B cell (primary cell): ENCODE measurements at regions of chr3 and their contacts with region 1.

Region 1: DNA sequence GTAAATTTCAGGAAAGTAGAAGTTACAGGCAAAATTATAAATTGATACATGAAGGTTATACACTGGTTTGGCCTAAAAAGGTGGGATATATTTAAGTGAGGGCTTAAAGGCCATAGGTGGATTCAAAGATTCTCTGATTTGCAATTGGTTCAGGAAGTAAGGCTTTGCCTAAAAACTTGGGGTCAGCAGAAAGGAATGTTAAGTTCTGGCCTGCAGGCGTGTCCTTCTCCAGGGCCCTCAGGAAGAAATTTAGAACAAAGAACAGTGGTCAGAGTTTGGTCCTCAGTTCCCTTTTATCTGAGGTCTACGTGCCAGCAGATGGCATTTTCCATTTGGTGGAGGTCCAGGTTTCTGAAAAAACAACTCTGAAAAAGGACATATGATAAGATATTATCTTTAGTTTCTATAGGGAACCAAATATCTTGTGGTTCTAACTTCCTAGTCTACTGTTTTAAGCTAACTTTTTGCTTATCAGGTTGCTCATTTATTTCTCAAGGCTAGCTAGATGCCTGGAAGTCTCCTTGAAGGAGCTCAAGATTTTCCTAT is 40.5 kb downstream of the SCN11A start:
- DNase-seq: no peak
- ATAC-seq: no peak
- H3K4me3 ChIP-seq: no peak overlapping the region
- H3K4me3 Mint-ChIP-seq: no peak overlapping the region
- H3K27ac ChIP-seq: no peak overlapping the region
- H3K27ac Mint-ChIP-seq: no peak overlapping the region
- H3K4me1 ChIP-seq: no peaks in the 10 kb centered on the region
- H3K4me1 Mint-ChIP-seq: peaks cover 2% of the 10 kb centered on the region
- H3K27me3 ChIP-seq: peaks cover 0 to 8% (median 0%) of the 10 kb centered on the region in 4 experiments
- H3K27me3 Mint-ChIP-seq: peaks cover 15% of the 10 kb centered on the region
- CTCF ChIP-seq: no peak

Region 2: DNA sequence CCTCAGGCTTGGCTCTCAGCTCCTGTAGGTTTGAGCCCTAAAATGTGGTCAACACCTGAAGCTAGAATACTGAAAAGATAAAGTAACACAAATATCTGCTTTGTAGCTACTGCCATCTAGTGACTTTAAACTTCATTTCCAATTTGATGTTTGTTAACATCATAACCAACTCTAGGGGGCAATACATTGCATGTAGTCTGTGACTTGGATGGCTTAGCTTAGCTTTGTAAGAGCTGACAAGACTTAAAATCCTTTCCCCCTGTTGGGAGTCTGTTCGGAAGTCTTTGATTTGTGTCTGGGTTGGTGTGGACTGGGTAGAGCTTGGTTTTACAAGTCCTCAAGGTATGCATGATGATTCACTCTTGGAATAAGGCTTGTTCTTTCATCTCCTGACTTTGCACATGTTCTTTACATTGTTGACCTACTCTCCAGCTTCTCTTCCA is 11.2 kb before region 1 on chr3:
- CTCF ChIA-PET with region 1: interaction called, 11 read pairs
- POLR2A ChIA-PET with region 1: no interaction called
- intact Hi-C with region 1: no loop called
- DNase-seq: peak; percentile 48
- ATAC-seq: peak; percentile 39
- H3K4me3 ChIP-seq: no peak overlapping the region
- H3K4me3 Mint-ChIP-seq: no peak overlapping the region
- H3K27ac ChIP-seq: no peak overlapping the region
- H3K27ac Mint-ChIP-seq: no peak overlapping the region
- H3K4me1 ChIP-seq: no peaks in the 10 kb centered on the region
- H3K4me1 Mint-ChIP-seq: no peaks in the 10 kb centered on the region
- H3K27me3 ChIP-seq: no peaks in the 10 kb centered on the region
- H3K27me3 Mint-ChIP-seq: peaks cover 27% of the 10 kb centered on the region
- CTCF ChIP-seq: peak; percentile 69